HEK293T (cell line): ENCODE measurements at regions of chr4 and their contacts with region 1.

Region 1: GRCh38 chr4:70993181-70994068 is at the start of gene DCK:
- DNase-seq: peak; percentile 91

Region 2: DNA sequence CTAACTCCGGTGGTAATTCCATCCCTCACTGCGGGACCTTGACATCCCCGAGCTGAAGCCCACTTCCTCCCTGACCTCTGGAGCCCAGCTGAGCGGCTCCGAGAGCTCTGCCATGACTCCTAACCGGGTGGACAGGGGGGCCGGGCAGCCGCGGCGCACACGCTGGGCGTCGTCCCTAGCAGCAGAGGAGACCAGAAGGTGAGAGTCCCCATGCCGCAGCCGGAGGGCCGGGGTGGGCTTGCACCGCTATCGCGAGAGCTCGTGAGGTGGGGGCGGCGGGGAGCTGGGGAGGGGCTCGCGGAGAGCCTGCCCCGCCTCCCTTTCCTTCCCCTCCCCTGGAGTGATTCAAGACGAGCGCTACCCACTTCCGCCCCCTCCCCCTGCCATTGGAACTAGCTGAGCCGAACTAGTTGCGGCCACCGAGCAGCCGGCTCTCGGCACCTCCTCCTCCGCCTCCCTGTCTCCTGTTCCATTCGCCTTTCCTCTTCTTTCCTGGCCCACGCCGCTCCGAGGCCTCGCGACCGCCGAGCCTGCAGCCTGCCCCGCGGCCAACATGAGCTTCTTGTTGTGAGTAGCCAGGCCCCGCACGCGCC is 91.3 kb before region 1 on chr4 and contains the start of gene MOB1B:
- CTCF ChIA-PET with region 1: no interaction called
- POLR2A ChIA-PET with region 1: interaction called, 11 read pairs
- DNase-seq: peak; percentile 92